Activated CD8-positive, alpha-beta T cell treated with anti-CD3 and anti-CD28 coated beads for 36 hours (primary cell): ENCODE measurements at regions of chr11 and their contacts with region 1.

Region 1: GRCh38 chr11:101860696-101861427 is 53.9 kb upstream of the CEP126 start:
- DNase-seq: peak; percentile 39
- ATAC-seq: peak; percentile 72
- H3K4me3 Mint-ChIP-seq: no peak overlapping the region
- H3K27ac Mint-ChIP-seq: no peak overlapping the region
- H3K4me1 Mint-ChIP-seq: no peaks in the 10 kb centered on the region
- H3K27me3 Mint-ChIP-seq: peaks cover 13% of the 10 kb centered on the region
- CTCF ChIP-seq: peak; percentile 77

Region 2: GRCh38 chr11:101797335-101797734 is 63.5 kb before region 1 on chr11:
- CTCF ChIA-PET with region 1: no interaction called
- POLR2A ChIA-PET with region 1: no interaction called
- intact Hi-C with region 1: no loop called
- DNase-seq: no peak
- ATAC-seq: no peak
- H3K4me3 Mint-ChIP-seq: no peak overlapping the region
- H3K27ac Mint-ChIP-seq: no peak overlapping the region
- H3K4me1 Mint-ChIP-seq: no peaks in the 10 kb centered on the region
- H3K27me3 Mint-ChIP-seq: no peaks in the 10 kb centered on the region
- CTCF ChIP-seq: no peak

Region 3: GRCh38 chr11:101848262-101848661 is 12.6 kb before region 1 on chr11:
- CTCF ChIA-PET with region 1: interaction called, 20 read pairs
- POLR2A ChIA-PET with region 1: no interaction called
- intact Hi-C with region 1: no loop called
- DNase-seq: no peak
- ATAC-seq: no peak
- H3K4me3 Mint-ChIP-seq: no peak overlapping the region
- H3K27ac Mint-ChIP-seq: no peak overlapping the region
- H3K4me1 Mint-ChIP-seq: no peaks in the 10 kb centered on the region
- H3K27me3 Mint-ChIP-seq: peaks cover 2% of the 10 kb centered on the region
- CTCF ChIP-seq: peak; percentile 33

Region 4: GRCh38 chr11:101880222-101880621 is 19.4 kb after region 1 on chr11:
- CTCF ChIA-PET with region 1: interaction called, 18 read pairs
- POLR2A ChIA-PET with region 1: interaction called, 4 read pairs
- intact Hi-C with region 1: no loop called
- DNase-seq: no peak
- ATAC-seq: no peak
- H3K4me3 Mint-ChIP-seq: no peak overlapping the region
- H3K27ac Mint-ChIP-seq: no peak overlapping the region
- H3K4me1 Mint-ChIP-seq: no peaks in the 10 kb centered on the region
- H3K27me3 Mint-ChIP-seq: peaks cover 33% of the 10 kb centered on the region
- CTCF ChIP-seq: no peak